Naive thymus-derived CD4-positive, alpha-beta T cell (primary cell): ENCODE measurements at regions of chr12 and their contacts with region 1.

Region 1: DNA sequence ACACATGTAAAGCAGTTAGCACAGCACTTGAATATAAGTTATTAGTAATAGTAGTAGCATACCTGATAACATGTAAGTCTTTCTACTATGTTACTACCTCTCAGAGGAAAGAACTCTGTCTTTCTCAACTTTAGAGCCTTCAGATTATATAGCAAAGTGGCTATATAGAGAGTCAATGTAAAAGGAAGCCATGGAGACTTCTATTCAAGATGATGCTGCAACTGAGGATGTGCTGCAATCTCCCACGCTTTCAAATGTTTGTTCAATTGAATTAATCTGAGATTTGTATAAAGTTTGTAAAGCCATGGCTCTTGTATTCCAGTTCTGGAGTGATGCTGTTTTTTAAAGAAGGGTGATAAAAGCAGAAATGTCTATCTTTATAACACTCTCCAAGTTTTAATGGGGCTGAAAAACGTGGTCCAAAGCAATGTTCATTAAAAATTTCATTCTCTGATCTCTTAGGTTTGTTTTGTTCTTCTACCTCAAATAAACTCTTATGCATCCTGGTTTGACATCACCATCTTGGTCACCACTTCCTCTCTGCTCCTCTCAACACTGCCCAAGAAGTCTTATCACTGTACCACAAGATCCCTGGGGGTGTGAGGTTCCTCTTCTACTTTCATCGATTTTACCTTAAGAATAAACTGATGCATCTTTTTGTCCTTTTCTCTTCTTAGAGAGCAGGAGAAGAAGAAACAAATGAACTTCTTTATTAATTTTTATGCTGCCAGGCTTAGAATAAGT is 40.6 kb downstream of the C12orf42 start:
- DNase-seq: peak in 7 of 9 donors; percentile 22 to 67 (median 49)
- ATAC-seq: peak; percentile 92
- H3K4me3 ChIP-seq: no peak overlapping the region
- H3K4me3 Mint-ChIP-seq: peak overlapping the region in 6 of 10 donors; percentile 9 to 56 (median 29)
- H3K27ac ChIP-seq: no peak overlapping the region
- H3K27ac Mint-ChIP-seq: peak overlapping the region; percentile 0 to 88 (median 61)
- H3K4me1 ChIP-seq: peaks cover 16 to 26% of the 10 kb centered on the region in 2 donors
- H3K4me1 Mint-ChIP-seq: peaks cover 8 to 60% (median 28%) of the 10 kb centered on the region in 7 donors
- H3K27me3 ChIP-seq: no peaks in the 10 kb centered on the region
- H3K27me3 Mint-ChIP-seq: peaks cover 0 to 3% (median 0%) of the 10 kb centered on the region in 5 donors

Region 2: DNA sequence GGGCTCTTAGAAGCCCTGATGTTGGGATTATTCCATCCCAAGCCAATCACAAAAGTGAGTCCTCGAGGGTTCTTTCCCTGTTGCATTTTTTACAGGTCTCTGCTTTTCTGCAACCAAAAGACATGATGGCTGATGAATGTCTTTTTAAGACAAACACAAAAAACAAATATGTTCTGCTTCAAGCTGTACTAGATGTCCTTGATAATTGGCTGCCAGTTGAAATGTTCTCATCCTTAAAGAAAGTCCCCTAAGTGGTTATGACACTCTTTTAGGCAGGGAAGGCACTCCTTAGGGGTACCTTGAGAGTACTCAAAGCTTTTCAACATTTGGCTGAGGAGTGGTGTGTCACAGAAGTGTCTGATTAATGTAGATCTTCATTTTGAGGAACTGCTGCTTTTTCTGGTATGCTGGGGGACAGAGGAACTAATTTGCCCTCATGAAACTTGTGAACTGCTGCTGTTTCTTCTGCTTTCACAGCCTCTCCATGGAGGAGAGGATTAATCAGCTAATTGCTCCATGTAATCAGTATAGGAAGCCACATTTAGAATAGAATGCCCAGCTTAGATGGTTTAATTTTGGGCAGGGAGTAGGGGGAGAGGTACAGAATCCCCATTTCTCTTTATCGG is 952.0 kb before region 1 on chr12:
- CTCF ChIA-PET with region 1: no interaction called
- POLR2A ChIA-PET with region 1: no interaction called
- intact Hi-C with region 1: no loop called
- DNase-seq: no peak
- ATAC-seq: peak; percentile 74
- H3K4me3 ChIP-seq: no peak overlapping the region
- H3K4me3 Mint-ChIP-seq: no peak overlapping the region
- H3K27ac ChIP-seq: no peak overlapping the region
- H3K27ac Mint-ChIP-seq: no peak overlapping the region
- H3K4me1 ChIP-seq: no peaks in the 10 kb centered on the region
- H3K4me1 Mint-ChIP-seq: no peaks in the 10 kb centered on the region
- H3K27me3 ChIP-seq: no peaks in the 10 kb centered on the region
- H3K27me3 Mint-ChIP-seq: peaks cover 0 to 19% (median 15%) of the 10 kb centered on the region in 5 donors

Region 3: DNA sequence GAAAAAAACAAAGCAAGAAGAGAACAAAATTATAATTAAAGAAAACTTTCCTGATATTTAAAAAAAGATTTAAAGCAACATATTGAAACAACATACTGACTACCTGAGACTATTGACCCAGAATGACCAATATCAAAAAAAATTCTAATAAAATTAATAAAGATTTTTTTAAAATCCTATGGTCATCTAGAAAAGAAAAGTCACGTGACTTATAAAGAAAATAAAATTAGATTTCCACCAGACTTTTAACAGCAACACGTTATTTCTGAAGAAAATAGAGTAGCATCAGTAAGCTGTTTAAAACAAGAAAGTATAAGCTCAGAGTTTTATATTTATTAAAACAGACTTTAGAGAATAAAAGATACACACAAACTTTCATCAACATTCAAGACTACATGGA is 197.4 kb before region 1 on chr12:
- CTCF ChIA-PET with region 1: no interaction called
- POLR2A ChIA-PET with region 1: no interaction called
- intact Hi-C with region 1: no loop called
- DNase-seq: no peak
- ATAC-seq: no peak
- H3K4me3 ChIP-seq: no peak overlapping the region
- H3K4me3 Mint-ChIP-seq: no peak overlapping the region
- H3K27ac ChIP-seq: no peak overlapping the region
- H3K27ac Mint-ChIP-seq: no peak overlapping the region
- H3K4me1 ChIP-seq: no peaks in the 10 kb centered on the region
- H3K4me1 Mint-ChIP-seq: no peaks in the 10 kb centered on the region
- H3K27me3 ChIP-seq: no peaks in the 10 kb centered on the region
- H3K27me3 Mint-ChIP-seq: peaks cover 0 to 5% (median 0%) of the 10 kb centered on the region in 5 donors

Region 4: GRCh38 chr12:103348935-103349334 is 106.3 kb before region 1 on chr12:
- CTCF ChIA-PET with region 1: no interaction called
- POLR2A ChIA-PET with region 1: no interaction called
- intact Hi-C with region 1: loop called in 1 of 2 experiments (anchors 10 kb)
- DNase-seq: peak in 2 of 9 donors; percentile 7 to 9
- ATAC-seq: peak; percentile 27
- H3K4me3 ChIP-seq: no peak overlapping the region
- H3K4me3 Mint-ChIP-seq: no peak overlapping the region
- H3K27ac ChIP-seq: no peak overlapping the region
- H3K27ac Mint-ChIP-seq: peak overlapping the region in 4 of 9 donors; percentile 1 to 59 (median 29)
- H3K4me1 ChIP-seq: no peaks in the 10 kb centered on the region
- H3K4me1 Mint-ChIP-seq: peaks cover 8 to 16% (median 11%) of the 10 kb centered on the region in 7 donors
- H3K27me3 ChIP-seq: no peaks in the 10 kb centered on the region
- H3K27me3 Mint-ChIP-seq: no peaks in the 10 kb centered on the region

Region 5: DNA sequence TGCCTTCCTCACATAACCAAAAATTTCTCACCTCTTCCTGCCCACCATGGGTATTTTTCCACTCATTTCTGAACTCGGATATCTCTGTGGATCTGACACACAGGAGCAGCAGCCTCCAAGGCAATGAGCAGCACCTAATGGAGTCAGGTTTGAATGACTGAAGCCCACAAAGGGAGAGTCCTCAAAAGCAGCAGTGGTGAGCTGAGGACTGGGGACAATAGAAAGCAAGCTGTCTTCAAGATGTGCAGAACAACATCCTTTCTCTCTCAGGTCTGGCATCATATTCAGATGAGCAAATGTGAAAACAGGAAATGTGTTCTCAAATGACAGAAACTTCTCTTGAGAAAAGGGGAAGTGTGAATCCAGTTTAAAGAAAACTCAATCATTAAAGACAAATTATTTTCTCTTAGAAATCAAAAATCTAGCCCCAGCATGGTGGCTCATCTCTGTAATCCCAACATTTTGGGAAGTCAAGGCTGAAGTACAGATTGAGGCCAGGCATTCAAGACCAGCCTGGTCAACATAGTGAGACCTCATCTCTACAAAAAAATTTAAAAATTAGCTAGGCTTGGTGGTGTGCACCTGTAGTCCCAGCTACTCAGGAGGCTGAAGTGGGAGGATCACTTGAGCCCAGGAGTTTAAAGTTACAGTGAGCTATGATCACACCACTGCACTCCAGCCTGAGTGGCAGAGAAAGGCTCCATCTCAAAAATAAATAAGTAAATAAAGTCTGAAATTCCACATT is 13.6 kb before region 1 on chr12:
- CTCF ChIA-PET with region 1: no interaction called
- POLR2A ChIA-PET with region 1: no interaction called
- intact Hi-C with region 1: loop called (anchors 1 to 2 kb)
- DNase-seq: peak in 8 of 9 donors; percentile 19 to 76 (median 58)
- ATAC-seq: peak; percentile 97
- H3K4me3 ChIP-seq: peak overlapping the region; percentile 26
- H3K4me3 Mint-ChIP-seq: peak overlapping the region; percentile 72 to 97 (median 91)
- H3K27ac ChIP-seq: peak overlapping the region; percentile 55
- H3K27ac Mint-ChIP-seq: peak overlapping the region; percentile 90 to 100 (median 97)
- H3K4me1 ChIP-seq: peaks cover 11 to 20% of the 10 kb centered on the region in 2 donors
- H3K4me1 Mint-ChIP-seq: peaks cover 0 to 33% (median 24%) of the 10 kb centered on the region in 7 donors
- H3K27me3 ChIP-seq: no peaks in the 10 kb centered on the region
- H3K27me3 Mint-ChIP-seq: no peaks in the 10 kb centered on the region

Region 6: DNA sequence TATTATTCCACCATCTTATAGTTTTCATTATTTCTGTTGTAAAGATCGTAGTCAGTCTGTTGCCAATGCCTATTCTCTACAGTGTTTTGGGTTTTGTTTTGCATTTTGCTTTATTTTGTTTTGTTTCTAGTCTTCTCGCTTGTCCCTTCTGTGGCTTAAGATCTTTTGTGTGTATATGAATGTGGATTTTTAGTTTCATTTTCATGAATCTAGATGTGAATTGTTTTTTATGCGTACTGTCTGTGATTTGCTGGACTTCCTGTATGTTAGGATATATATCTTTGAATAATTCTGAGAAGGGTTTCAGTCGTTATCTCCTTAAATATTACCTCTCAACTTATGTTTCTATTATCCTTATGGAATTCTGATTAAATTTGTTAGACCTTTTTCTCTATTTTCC is 27.2 kb after region 1 on chr12:
- CTCF ChIA-PET with region 1: interaction called, 4 read pairs
- POLR2A ChIA-PET with region 1: no interaction called
- intact Hi-C with region 1: loop called in 1 of 2 experiments (anchors 2 kb)
- DNase-seq: no peak
- ATAC-seq: no peak
- H3K4me3 ChIP-seq: peak overlapping the region; percentile 7
- H3K4me3 Mint-ChIP-seq: peak overlapping the region in 8 of 10 donors; percentile 54 to 79 (median 68)
- H3K27ac ChIP-seq: no peak overlapping the region
- H3K27ac Mint-ChIP-seq: peak overlapping the region in 8 of 9 donors; percentile 5 to 81 (median 65)
- H3K4me1 ChIP-seq: no peaks in the 10 kb centered on the region
- H3K4me1 Mint-ChIP-seq: peaks cover 0 to 6% (median 5%) of the 10 kb centered on the region in 7 donors
- H3K27me3 ChIP-seq: no peaks in the 10 kb centered on the region
- H3K27me3 Mint-ChIP-seq: peaks cover 0 to 4% (median 0%) of the 10 kb centered on the region in 5 donors